K562 (cell line): ENCODE measurements at regions of chr13 and their contacts with region 1.

Region 1: DNA sequence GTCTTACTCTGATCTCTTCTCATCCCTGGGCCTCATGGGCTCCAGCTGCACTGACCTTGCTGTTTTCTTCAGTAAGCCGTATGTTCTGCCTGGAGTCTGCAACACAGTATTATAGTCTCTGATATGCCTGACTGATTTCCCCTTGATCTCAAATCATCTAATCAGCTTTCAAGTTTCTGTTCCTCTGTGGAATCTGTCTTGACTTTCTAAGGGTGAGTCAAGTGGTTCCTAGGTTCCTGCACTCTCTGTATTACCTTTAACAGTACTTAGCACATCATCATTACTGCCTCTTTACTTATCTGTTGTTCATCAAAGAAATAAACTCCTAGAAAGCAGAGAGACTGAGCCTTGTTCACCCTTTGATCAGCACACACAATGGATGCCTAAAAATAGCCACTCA is 350.7 kb downstream of the LMO7 start:
- DNase-seq: no peak
- ATAC-seq: 0 out of 3 replicates have a peak, but pooled peaks have one; percentile 18
- H3K4me3 ChIP-seq: no peak overlapping the region
- H3K27ac ChIP-seq: no peak overlapping the region
- H3K4me1 ChIP-seq: peaks cover 0 to 13% of the 10 kb centered on the region in 2 experiments; a peak in 2 of 5 replicates
- H3K27me3 ChIP-seq: no peaks in the 10 kb centered on the region
- CTCF ChIP-seq: no peak
- EP300 ChIP-seq: no peak
- POLR2A ChIP-seq: no peak
- RAD21 ChIP-seq: no peak

Region 2: DNA sequence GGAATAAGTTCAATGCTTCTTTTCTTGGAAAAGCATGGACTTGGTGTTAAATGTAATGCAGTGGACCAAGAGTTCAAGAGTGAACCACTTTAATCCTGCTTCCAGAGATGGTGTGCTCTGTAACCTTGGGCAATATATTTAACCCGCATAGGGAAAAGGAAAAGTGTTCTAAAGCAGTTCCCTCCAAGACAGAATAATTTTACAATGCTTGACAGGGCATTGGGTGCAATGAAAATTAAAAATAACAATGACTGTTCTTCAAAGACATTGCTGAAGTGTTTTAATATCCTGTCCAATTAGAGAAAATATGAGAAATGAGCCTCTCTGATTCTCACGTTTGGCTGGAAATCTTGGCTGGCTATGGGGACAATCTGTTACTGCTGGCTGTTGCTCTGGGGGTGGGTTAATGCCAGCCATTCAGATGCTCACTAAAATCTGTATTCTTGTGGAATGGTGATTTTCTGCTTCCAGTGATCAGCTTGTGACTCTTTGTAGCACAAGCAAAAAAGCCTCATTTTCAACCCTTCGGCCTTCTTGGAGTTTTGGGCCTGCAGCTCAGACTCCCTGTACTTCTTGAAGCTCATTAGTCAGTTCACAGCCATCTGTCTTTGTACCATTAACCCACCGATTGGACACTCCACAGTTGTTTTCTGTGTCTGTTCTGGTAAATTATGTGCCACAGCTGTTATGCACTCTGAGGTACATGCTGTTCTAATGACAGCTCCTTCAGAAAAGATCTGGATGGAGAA is 40.1 kb before region 1 on chr13:
- CTCF ChIA-PET with region 1: no interaction called
- POLR2A ChIA-PET with region 1: no interaction called
- in situ Hi-C with region 1: no loop called
- intact Hi-C with region 1: loop called (anchors 5 kb)
- DNase-seq: no peak
- ATAC-seq: no peak; the same call in 2 of the 3 replicates
- H3K4me3 ChIP-seq: no peak overlapping the region
- H3K27ac ChIP-seq: no peak overlapping the region
- H3K4me1 ChIP-seq: peaks cover 0 to 3% of the 10 kb centered on the region in 2 experiments; a peak in 3 of 5 replicates
- H3K27me3 ChIP-seq: no peaks in the 10 kb centered on the region
- CTCF ChIP-seq: no peak
- EP300 ChIP-seq: no peak
- POLR2A ChIP-seq: no peak
- RAD21 ChIP-seq: no peak